ENCODE measurements at regions of chr12 and their contacts with region 1.

Region 1: DNA sequence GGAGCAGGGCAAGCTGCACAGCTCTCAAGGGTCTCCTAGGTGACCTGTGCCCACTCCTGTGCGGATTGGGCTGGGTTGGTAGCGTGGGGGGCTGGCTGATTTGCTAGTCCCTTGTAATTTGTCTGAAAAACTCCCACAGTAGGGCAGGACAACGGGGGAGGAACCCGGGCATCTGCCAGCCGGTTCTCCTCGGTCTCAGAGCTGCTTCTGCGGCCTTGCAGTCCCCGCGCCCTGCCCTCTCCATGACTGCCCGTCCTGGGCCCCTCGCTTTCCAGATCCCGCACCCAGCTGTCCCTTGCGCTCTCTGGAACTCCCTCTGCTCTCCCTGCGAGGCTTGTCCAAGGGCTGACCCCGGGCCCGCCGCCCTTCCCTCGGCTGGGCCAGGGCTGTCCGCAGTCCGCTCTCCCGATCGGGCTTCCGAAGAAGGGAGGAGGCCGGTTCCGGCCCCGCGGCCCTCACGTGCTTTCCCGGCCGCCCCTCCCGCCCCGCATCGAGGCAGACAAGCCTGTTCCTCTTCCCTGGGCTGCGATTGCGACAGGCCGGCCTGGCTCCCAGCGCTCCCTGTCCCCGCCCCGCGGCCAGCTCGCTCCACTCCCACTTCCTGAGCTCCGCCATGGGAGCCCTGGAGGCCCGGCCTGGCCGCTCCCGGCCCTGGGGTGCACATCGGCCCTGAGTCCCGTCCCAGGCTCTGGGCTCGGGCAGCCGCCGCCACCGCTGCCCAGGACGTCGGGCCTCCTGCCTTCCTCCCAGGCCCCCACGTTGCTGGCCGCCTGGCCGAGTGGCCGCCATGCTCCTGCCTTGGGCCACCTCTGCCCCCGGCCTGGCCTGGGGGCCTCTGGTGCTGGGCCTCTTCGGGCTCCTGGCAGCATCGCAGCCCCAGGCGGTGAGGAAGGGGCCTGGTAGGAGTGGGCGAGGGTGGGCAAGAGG is at the start of gene LTBR:
- DNase-seq: peak; percentile 98 to 99
- ATAC-seq: peak; percentile 96 to 98 (median 96)
- H3K4me3 ChIP-seq: peak within 1 kb of the TSS; percentile 83
- H3K27ac ChIP-seq: peak within 1 kb of the TSS; percentile 97
- H3K4me1 ChIP-seq: peaks cover 28% of the 10 kb centered on the region
- H3K27me3 ChIP-seq: no peaks in the 10 kb centered on the region
- CTCF ChIP-seq: peak; percentile 4
- total RNA-seq, gene LTBR: 23.7 to 38.6 (median 34.1) TPM

Region 2: GRCh38 chr12:6335451-6336078 is 48.3 kb before region 1 on chr12:
- intact Hi-C with region 1: loop called in 1 of 2 experiments (anchors 1 kb)
- DNase-seq: peak; percentile 84 to 86
- ATAC-seq: peak; percentile 59 to 70 (median 62)
- H3K4me3 ChIP-seq: peak overlapping the region; percentile 99
- H3K27ac ChIP-seq: peak overlapping the region; percentile 88
- H3K4me1 ChIP-seq: peaks cover 56% of the 10 kb centered on the region
- H3K27me3 ChIP-seq: no peaks in the 10 kb centered on the region
- CTCF ChIP-seq: peak; percentile 42

Region 3: DNA sequence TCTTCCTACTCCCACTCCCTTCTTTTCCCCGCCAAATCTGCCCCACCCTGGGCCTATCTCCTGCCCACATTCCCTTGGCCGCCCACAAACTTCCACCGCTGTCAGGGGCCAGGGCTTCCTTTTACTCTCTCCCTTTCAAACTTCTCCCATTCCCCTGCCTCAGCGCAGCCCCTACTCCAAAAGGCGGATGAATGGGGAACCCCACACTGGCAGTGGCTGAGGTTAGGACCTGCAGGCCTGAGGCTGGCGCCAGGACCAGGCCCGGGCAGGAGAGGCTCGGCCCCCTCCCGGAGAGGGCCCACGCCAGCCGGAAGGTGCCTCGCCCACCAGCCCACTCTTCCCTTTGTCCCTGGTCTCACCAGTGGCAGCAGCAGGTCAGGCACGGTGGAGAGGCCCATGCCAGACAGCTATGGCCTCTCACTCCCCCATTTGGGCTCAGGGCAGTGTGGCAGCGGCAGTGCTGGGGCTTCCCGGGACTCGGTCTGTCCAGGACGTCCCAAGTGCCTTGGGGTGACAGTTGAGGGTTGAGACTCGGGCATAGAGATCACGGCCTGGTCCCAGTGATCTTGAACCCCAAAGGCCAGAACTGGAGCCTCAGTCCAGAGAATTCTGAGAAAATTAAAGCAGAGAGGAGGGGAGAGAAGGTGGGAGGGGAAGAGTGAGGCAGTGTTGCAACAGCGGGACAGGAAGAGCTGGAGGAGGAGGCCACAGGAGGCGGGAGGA is 42.3 kb before region 1 on chr12 and contains the start of gene TNFRSF1A:
- intact Hi-C with region 1: loop called (anchors 1 to 2 kb)
- DNase-seq: peak; percentile 73 to 85
- ATAC-seq: peak; percentile 81 to 89 (median 84)
- H3K4me3 ChIP-seq: peak within 1 kb of the TSS; percentile 99
- H3K27ac ChIP-seq: peak within 1 kb of the TSS; percentile 88
- H3K4me1 ChIP-seq: peaks cover 46% of the 10 kb centered on the region
- H3K27me3 ChIP-seq: no peaks in the 10 kb centered on the region
- CTCF ChIP-seq: no peak
- total RNA-seq, gene TNFRSF1A: 38.8 to 224 (median 127) TPM

Region 4: DNA sequence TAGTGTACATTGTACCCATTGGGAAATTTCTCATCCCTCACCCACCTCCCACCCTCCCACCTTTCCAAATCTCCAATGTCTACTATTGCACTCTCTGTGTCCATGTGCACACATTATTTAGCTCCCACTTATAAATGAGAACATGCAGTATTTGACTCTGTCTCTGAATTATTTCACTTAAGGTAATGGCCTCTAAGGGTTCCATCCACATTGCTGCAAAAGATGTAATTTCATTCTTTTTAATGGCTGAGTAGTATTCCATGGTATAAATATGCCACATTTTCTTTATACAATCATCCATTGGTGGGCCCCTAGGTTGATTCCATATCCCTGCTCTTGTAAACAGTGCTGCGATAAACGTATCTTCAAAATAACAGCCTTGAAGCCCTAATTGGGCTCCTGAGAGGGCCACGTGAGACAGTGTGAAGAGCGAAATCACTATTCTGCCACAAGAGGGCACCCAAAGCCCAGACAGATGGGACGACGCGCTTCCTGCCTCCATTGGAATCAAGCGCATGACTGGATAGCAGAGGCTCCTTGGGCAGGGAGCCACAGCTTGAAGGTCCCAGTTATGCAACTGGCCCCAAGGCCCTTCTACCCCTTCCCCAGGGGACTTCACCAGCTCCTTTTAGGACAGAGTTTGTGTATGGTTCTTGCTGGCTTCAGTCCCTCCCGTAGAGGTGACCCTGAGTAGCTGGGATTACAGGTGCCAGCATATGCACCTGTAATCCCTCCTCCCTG is 39.6 kb after region 1 on chr12:
- intact Hi-C with region 1: no loop called
- DNase-seq: peak; percentile 86 to 91
- ATAC-seq: peak; percentile 98 to 99 (median 98)
- H3K4me3 ChIP-seq: no peak overlapping the region
- H3K27ac ChIP-seq: peak overlapping the region; percentile 54
- H3K4me1 ChIP-seq: peaks cover 8% of the 10 kb centered on the region
- H3K27me3 ChIP-seq: no peaks in the 10 kb centered on the region
- CTCF ChIP-seq: peak; percentile 87